ENCODE measurements at regions of chr11 and their contacts with region 1.

Region 1: DNA sequence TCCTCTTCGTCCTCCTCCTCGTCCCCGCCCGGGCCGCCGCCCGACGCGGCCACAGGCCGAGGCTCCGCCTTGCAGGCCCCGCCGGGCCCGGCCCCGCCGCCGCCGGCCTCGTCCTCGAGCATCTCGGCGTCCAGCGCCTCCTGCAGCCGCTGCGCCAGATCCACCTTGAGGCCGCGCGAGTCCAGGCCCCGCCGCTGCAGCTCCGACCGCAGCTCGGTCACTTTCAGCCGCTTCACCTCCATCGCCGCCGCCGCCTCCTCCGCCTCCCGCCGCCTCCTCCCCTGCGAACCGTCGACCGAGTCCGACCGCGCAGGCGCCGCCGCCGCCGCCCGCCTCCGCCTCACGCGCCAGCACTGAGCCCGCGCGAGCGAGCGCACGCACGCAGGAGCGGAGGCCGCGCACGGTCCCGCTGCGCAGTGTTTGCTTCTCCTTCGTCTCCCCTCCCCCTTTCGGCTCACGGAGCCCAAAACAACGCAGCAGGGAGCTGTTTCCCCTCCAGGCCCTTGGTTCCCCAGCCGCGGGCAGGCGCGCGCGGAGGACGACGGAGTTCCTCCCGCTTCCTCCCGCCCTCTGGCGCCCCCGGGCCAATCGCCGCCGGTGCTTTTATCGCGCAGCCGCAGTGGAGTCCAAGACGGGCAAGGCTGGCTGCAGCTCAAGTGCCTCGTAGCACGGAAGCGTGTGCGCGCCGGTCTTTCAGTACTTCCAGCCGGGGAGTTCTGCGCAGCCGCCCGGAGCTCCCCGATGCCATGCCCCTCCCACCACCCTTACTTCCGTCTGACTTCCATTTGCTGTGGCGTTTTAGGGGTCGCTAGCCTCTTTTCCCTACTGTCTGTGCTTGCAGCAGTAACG is at the start of gene HNRNPUL2:
- DNase-seq: peak; percentile 97
- ATAC-seq: peak; percentile 89
- H3K4me3 ChIP-seq: peak within 1 kb of the TSS; percentile 91 to 100 (median 94)
- H3K27ac ChIP-seq: peak within 1 kb of the TSS; percentile 99
- H3K4me1 ChIP-seq: peaks cover 46% of the 10 kb centered on the region
- H3K27me3 ChIP-seq: peaks cover 0 to 3% of the 10 kb centered on the region in 2 experiments; a peak in 1 of 5 replicates
- CTCF ChIP-seq: peak; percentile 33
- EP300 ChIP-seq: no peak
- POLR2A ChIP-seq: peak; percentile 87 to 91
- RAD21 ChIP-seq: peak; percentile 53; the same call in 1 of the 2 replicates
- total RNA-seq, gene HNRNPUL2: 8.4 and 9.6 TPM in 2 replicates

Region 2: GRCh38 chr11:62461740-62462507 is 265.2 kb before region 1 on chr11:
- CTCF ChIA-PET with region 1: no interaction called
- POLR2A ChIA-PET with region 1: no interaction called
- in situ Hi-C with region 1: no loop called
- intact Hi-C with region 1: no loop called
- DNase-seq: no peak
- ATAC-seq: no peak
- H3K4me3 ChIP-seq: no peak overlapping the region
- H3K27ac ChIP-seq: no peak overlapping the region
- H3K4me1 ChIP-seq: peaks cover 65% of the 10 kb centered on the region
- H3K27me3 ChIP-seq: no peaks in the 10 kb centered on the region
- CTCF ChIP-seq: no peak
- EP300 ChIP-seq: no peak
- POLR2A ChIP-seq: no peak
- RAD21 ChIP-seq: no peak

Region 3: GRCh38 chr11:62621567-62622470 is 105.3 kb before region 1 on chr11 and contains the start of gene B3GAT3:
- CTCF ChIA-PET with region 1: interaction called, 4 read pairs
- POLR2A ChIA-PET with region 1: interaction called, 11 read pairs
- in situ Hi-C with region 1: no loop called
- intact Hi-C with region 1: no loop called
- DNase-seq: peak; percentile 95
- ATAC-seq: peak; percentile 95
- H3K4me3 ChIP-seq: peak within 1 kb of the TSS; percentile 74 to 90 (median 81)
- H3K27ac ChIP-seq: peak within 1 kb of the TSS; percentile 72
- H3K4me1 ChIP-seq: peaks cover 21% of the 10 kb centered on the region
- H3K27me3 ChIP-seq: no peaks in the 10 kb centered on the region; a peak in 1 of 5 replicates
- CTCF ChIP-seq: peak; percentile 39
- EP300 ChIP-seq: 0 out of 4 replicates have a peak, but pooled peaks of 1 of the 2 experiments have one; percentile 18
- POLR2A ChIP-seq: peak; percentile 42 to 89
- RAD21 ChIP-seq: peak; percentile 20
- total RNA-seq, gene B3GAT3: 8.4 and 21.3 TPM in 2 replicates

Region 4: DNA sequence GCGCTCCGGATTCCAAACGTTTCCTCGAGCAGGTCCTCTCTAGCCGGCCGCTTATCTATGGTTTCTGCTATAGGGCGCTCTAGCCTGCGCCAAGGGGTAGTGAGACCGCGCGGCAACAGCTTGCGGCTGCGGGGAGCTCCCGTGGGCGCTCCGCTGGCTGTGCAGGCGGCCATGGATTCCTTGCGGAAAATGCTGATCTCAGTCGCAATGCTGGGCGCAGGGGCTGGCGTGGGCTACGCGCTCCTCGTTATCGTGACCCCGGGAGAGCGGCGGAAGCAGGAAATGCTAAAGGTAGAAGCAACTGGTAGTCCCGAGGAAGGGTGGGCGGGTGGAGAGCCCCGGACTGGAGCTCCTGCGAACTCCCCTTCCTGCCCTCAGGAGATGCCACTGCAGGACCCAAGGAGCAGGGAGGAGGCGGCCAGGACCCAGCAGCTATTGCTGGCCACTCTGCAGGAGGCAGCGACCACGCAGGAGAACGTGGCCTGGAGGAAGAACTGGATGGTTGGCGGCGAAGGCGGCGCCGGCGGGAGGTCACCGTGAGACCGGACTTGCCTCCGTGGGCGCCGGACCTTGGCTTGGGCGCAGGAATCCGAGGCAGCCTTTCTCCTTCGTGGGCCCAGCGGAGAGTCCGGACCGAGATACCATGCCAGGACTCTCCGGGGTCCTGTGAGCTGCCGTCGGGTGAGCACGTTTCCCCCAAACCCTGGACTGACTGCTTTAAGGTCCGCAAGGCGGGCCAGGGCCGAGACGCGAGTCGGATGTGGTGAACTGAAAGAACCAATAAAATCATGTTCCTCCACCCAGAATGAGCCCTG is 55.4 kb before region 1 on chr11 and contains the starts of genes LBHD1 and UQCC3:
- CTCF ChIA-PET with region 1: no interaction called
- POLR2A ChIA-PET with region 1: interaction called, 27 read pairs
- in situ Hi-C with region 1: no loop called
- intact Hi-C with region 1: no loop called
- DNase-seq: peak; percentile 79
- ATAC-seq: peak; percentile 83
- H3K4me3 ChIP-seq: peak within 1 kb of the TSS; percentile 76 to 98 (median 91)
- H3K27ac ChIP-seq: peak within 1 kb of the TSS; percentile 90
- H3K4me1 ChIP-seq: peaks cover 59% of the 10 kb centered on the region
- H3K27me3 ChIP-seq: no peaks in the 10 kb centered on the region; a peak in 1 of 5 replicates
- CTCF ChIP-seq: no peak; the same call in none of the 2 replicates
- EP300 ChIP-seq: peak in 1 of 2 experiments; percentile 21; a peak in 1 of 4 replicates
- POLR2A ChIP-seq: peak; percentile 80 to 82
- RAD21 ChIP-seq: no peak
- total RNA-seq, gene LBHD1: 1.4 and 3.7 TPM in 2 replicates
- total RNA-seq, gene UQCC3: 12.1 and 16.0 TPM in 2 replicates

Region 5: GRCh38 chr11:62689421-62690183 is 37.5 kb before region 1 on chr11 and contains the start of gene LRRN4CL:
- CTCF ChIA-PET with region 1: no interaction called
- POLR2A ChIA-PET with region 1: no interaction called
- in situ Hi-C with region 1: no loop called
- intact Hi-C with region 1: no loop called
- DNase-seq: no peak
- ATAC-seq: peak; percentile 13; the same call in 1 of the 3 replicates
- H3K4me3 ChIP-seq: no peak within 1 kb of the TSS
- H3K27ac ChIP-seq: no peak within 1 kb of the TSS
- H3K4me1 ChIP-seq: no peaks in the 10 kb centered on the region
- H3K27me3 ChIP-seq: no peaks in the 10 kb centered on the region
- CTCF ChIP-seq: no peak
- EP300 ChIP-seq: no peak
- POLR2A ChIP-seq: 0 out of 4 replicates have a peak, but pooled peaks of 1 of the 2 experiments have one; percentile 18
- RAD21 ChIP-seq: no peak
- total RNA-seq, gene LRRN4CL: 0.11 TPM in 1 of 2 replicates, not detected in the other

Region 6: GRCh38 chr11:62747475-62748160 is 20.5 kb after region 1 on chr11:
- CTCF ChIA-PET with region 1: no interaction called
- POLR2A ChIA-PET with region 1: interaction called, 129 read pairs
- in situ Hi-C with region 1: no loop called
- intact Hi-C with region 1: no loop called
- DNase-seq: no peak
- ATAC-seq: no peak
- H3K4me3 ChIP-seq: no peak overlapping the region
- H3K27ac ChIP-seq: no peak overlapping the region
- H3K4me1 ChIP-seq: no peaks in the 10 kb centered on the region
- H3K27me3 ChIP-seq: no peaks in the 10 kb centered on the region
- CTCF ChIP-seq: no peak
- EP300 ChIP-seq: no peak
- POLR2A ChIP-seq: no peak
- RAD21 ChIP-seq: no peak

Region 7: GRCh38 chr11:62787005-62787759 is 60.0 kb after region 1 on chr11 and contains the start of gene TMEM179B:
- CTCF ChIA-PET with region 1: interaction called, 13 read pairs
- POLR2A ChIA-PET with region 1: interaction called, 22 read pairs
- in situ Hi-C with region 1: no loop called
- intact Hi-C with region 1: loop called (anchors 2 kb)
- DNase-seq: peak; percentile 96
- ATAC-seq: peak; percentile 77
- H3K4me3 ChIP-seq: peak within 1 kb of the TSS; percentile 65 to 88 (median 81)
- H3K27ac ChIP-seq: peak within 1 kb of the TSS; percentile 79
- H3K4me1 ChIP-seq: peaks cover 45% of the 10 kb centered on the region
- H3K27me3 ChIP-seq: no peaks in the 10 kb centered on the region; a peak in 1 of 5 replicates
- CTCF ChIP-seq: peak; percentile 79
- EP300 ChIP-seq: no peak; a peak in 1 of 4 replicates
- POLR2A ChIP-seq: peak; percentile 91 to 98
- RAD21 ChIP-seq: no peak
- total RNA-seq, gene TMEM179B: 11.4 and 24.8 TPM in 2 replicates

Region 8: DNA sequence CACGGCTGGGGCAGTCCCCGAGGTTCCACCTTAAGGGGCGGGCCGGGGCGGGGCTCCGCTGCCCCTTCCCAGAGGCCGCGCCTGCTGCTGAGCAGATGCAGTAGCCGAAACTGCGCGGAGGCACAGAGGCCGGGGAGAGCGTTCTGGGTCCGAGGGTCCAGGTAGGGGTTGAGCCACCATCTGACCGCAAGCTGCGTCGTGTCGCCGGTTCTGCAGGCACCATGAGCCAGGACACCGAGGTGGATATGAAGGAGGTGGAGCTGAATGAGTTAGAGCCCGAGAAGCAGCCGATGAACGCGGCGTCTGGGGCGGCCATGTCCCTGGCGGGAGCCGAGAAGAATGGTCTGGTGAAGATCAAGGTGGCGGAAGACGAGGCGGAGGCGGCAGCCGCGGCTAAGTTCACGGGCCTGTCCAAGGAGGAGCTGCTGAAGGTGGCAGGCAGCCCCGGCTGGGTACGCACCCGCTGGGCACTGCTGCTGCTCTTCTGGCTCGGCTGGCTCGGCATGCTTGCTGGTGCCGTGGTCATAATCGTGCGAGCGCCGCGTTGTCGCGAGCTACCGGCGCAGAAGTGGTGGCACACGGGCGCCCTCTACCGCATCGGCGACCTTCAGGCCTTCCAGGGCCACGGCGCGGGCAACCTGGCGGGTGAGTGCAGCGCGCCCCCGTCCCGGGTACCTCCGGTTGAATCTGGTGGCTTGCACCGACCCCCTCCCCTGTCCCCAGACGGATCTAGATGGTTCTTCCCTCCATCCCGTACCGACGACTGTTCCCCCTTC is 153.9 kb after region 1 on chr11 and contains the start of gene SLC3A2:
- CTCF ChIA-PET with region 1: no interaction called
- POLR2A ChIA-PET with region 1: interaction called, 18 read pairs
- in situ Hi-C with region 1: no loop called
- intact Hi-C with region 1: no loop called
- DNase-seq: peak; percentile 74
- ATAC-seq: peak; percentile 91
- H3K4me3 ChIP-seq: peak within 1 kb of the TSS; percentile 92 to 99 (median 94)
- H3K27ac ChIP-seq: peak within 1 kb of the TSS; percentile 93
- H3K4me1 ChIP-seq: peaks cover 56% of the 10 kb centered on the region
- H3K27me3 ChIP-seq: no peaks in the 10 kb centered on the region; a peak in 1 of 5 replicates
- CTCF ChIP-seq: peak; percentile 94
- EP300 ChIP-seq: no peak
- POLR2A ChIP-seq: peak; percentile 96 to 98
- RAD21 ChIP-seq: peak; percentile 84
- total RNA-seq, gene SLC3A2: 94.8 and 213 TPM in 2 replicates

Measured in HepG2 (cell line).